HepG2 (cell line): ENCODE measurements at regions of chr9 and their contacts with region 1.

Region 1: DNA sequence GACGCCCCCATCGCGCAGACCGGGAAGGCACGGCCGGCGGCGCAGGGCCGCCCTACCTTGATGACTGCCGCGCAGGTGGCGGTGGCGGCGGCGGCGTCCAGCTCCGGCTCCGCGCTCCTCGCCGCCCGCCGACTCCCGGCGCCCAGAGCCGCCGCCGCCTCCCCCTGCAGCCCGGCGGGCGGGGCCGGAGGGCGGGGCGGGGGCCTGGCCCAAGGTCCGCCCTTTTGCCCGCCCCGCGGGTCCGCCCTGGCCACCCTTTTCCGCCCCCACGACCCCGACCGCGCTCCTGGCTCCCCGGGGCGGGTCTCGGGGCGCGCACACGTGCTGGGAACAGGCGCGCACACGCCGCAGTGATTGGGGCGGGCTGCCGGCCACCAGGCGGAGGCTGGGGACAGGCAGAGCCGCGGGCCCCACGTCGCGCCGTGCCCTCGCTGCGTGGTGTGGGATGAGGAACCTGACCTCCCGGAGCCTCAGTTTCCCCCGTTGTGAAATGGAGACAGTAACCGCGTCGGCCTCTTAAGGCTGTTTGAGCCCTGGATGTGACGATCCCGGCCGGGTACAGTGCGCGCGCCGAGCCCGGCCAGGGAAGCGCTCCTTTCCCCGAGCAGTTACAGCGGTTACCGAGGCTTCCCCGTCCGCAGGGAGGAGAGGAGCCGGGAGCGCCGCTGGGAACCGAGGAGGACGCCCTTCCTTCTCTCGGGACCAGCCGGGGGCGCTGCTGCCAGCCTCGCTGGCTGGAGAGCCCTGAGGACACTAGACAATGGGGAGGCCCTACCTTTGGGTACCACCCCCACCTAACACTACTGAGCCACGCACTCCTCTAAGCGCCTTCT is at the start of gene CORO2A:
- DNase-seq: peak; percentile 67
- ATAC-seq: peak; percentile 81
- H3K4me3 ChIP-seq: peak within 1 kb of the TSS; percentile 81 to 98 (median 84)
- H3K27ac ChIP-seq: peak within 1 kb of the TSS; percentile 82
- H3K4me1 ChIP-seq: peaks cover 44% of the 10 kb centered on the region
- H3K27me3 ChIP-seq: no peaks in the 10 kb centered on the region
- CTCF ChIP-seq: peak; percentile 88
- EP300 ChIP-seq: 0 out of 4 replicates have a peak, but pooled peaks of 1 of the 2 experiments have one; percentile 24
- POLR2A ChIP-seq: peak; percentile 45 to 80; a peak in 3 of 4 replicates
- RAD21 ChIP-seq: peak; percentile 56
- total RNA-seq, gene CORO2A: 14.4 and 19.8 TPM in 2 replicates

Region 2: GRCh38 chr9:98074115-98074990 is 118.4 kb before region 1 on chr9:
- CTCF ChIA-PET with region 1: no interaction called
- POLR2A ChIA-PET with region 1: no interaction called
- in situ Hi-C with region 1: no loop called
- intact Hi-C with region 1: loop called (anchors 5 kb)
- DNase-seq: peak; percentile 36
- ATAC-seq: peak; percentile 73
- H3K4me3 ChIP-seq: no peak overlapping the region
- H3K27ac ChIP-seq: peak overlapping the region; percentile 29
- H3K4me1 ChIP-seq: peaks cover 42% of the 10 kb centered on the region
- H3K27me3 ChIP-seq: no peaks in the 10 kb centered on the region
- CTCF ChIP-seq: peak; percentile 87
- EP300 ChIP-seq: no peak
- POLR2A ChIP-seq: no peak
- RAD21 ChIP-seq: peak; percentile 74

Region 3: GRCh38 chr9:98118640-98119601 is 73.8 kb before region 1 on chr9 and contains the start of gene TRIM14:
- CTCF ChIA-PET with region 1: interaction called, 3 read pairs
- POLR2A ChIA-PET with region 1: interaction called, 24 read pairs
- in situ Hi-C with region 1: loop called (anchors 5 kb)
- intact Hi-C with region 1: loop called (anchors 1 kb)
- DNase-seq: peak; percentile 69
- ATAC-seq: peak; percentile 88
- H3K4me3 ChIP-seq: peak within 1 kb of the TSS; percentile 57 to 87 (median 81)
- H3K27ac ChIP-seq: peak within 1 kb of the TSS; percentile 81
- H3K4me1 ChIP-seq: peaks cover 19% of the 10 kb centered on the region
- H3K27me3 ChIP-seq: no peaks in the 10 kb centered on the region
- CTCF ChIP-seq: peak; percentile 86
- EP300 ChIP-seq: no peak
- POLR2A ChIP-seq: peak; percentile 41 to 46; a peak in 3 of 4 replicates
- RAD21 ChIP-seq: peak; percentile 76
- total RNA-seq, gene TRIM14: 13.0 and 13.8 TPM in 2 replicates

Region 4: GRCh38 chr9:98146101-98146991 is 46.4 kb before region 1 on chr9:
- CTCF ChIA-PET with region 1: no interaction called
- POLR2A ChIA-PET with region 1: interaction called, 5 read pairs
- in situ Hi-C with region 1: no loop called
- intact Hi-C with region 1: loop called (anchors 2 kb)
- DNase-seq: peak; percentile 94
- ATAC-seq: peak; percentile 96
- H3K4me3 ChIP-seq: peak overlapping the region in 1 of 3 experiments; percentile 37; a peak in 2 of 6 replicates
- H3K27ac ChIP-seq: peak overlapping the region; percentile 85
- H3K4me1 ChIP-seq: peaks cover 63% of the 10 kb centered on the region
- H3K27me3 ChIP-seq: no peaks in the 10 kb centered on the region
- CTCF ChIP-seq: peak; percentile 45
- EP300 ChIP-seq: peak; percentile 59 to 78; a peak in 2 of 4 replicates
- POLR2A ChIP-seq: peak in 1 of 2 experiments; percentile 59; a peak in 2 of 4 replicates
- RAD21 ChIP-seq: no peak; the same call in 1 of the 2 replicates

Region 5: GRCh38 chr9:98176391-98177259 is 16.1 kb before region 1 on chr9:
- CTCF ChIA-PET with region 1: no interaction called
- POLR2A ChIA-PET with region 1: no interaction called
- in situ Hi-C with region 1: no loop called
- intact Hi-C with region 1: loop called (anchors 2 kb)
- DNase-seq: peak; percentile 53
- ATAC-seq: peak; percentile 42
- H3K4me3 ChIP-seq: peak overlapping the region in 1 of 3 experiments; percentile 17; a peak in 2 of 6 replicates
- H3K27ac ChIP-seq: peak overlapping the region; percentile 58
- H3K4me1 ChIP-seq: peaks cover 84% of the 10 kb centered on the region
- H3K27me3 ChIP-seq: no peaks in the 10 kb centered on the region
- CTCF ChIP-seq: no peak
- EP300 ChIP-seq: peak in 1 of 2 experiments; percentile 72; a peak in 1 of 4 replicates
- POLR2A ChIP-seq: no peak
- RAD21 ChIP-seq: no peak

Region 6: DNA sequence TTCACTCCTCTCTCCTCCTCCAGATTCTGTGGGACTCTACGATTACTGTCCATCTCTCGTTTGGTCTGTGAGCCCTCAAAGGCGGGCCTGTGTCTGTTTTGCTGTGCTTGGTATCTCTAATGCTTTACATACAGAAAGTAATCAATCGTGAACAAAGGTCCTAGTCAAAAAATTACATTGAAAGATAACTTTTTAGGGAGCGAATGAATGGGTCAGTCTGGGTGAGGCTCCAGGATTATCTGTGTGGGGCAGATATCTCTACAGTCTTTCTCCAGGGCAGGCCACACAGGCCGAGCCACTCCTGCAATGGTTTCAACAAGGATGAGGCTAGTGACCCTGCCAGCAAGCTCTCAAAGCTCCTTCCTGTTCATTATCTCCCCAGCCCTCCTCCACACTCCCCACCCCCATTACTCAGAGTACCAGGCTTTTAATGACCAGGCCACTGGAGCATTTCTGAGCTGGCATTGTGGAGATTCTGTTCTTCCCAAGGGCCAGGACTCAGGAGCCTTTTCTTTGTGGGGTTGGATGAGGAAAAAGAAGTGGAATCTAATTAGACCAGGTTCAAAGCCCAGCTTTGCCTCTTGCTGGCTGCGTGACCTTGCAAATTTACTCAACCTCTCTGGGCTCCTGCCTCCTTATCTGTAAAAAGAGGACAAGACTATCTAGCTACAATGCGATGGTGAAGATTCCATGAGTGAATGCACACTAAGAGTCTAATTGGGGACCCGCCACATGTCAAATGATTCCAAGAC is 10.5 kb before region 1 on chr9:
- CTCF ChIA-PET with region 1: no interaction called
- POLR2A ChIA-PET with region 1: interaction called, 15 read pairs
- in situ Hi-C with region 1: no loop called
- intact Hi-C with region 1: loop called (anchors 2 kb)
- DNase-seq: no peak
- ATAC-seq: peak; percentile 75
- H3K4me3 ChIP-seq: peak overlapping the region in 1 of 3 experiments; percentile 48; a peak in 1 of 6 replicates
- H3K27ac ChIP-seq: peak overlapping the region; percentile 89
- H3K4me1 ChIP-seq: peaks cover 65% of the 10 kb centered on the region
- H3K27me3 ChIP-seq: no peaks in the 10 kb centered on the region
- CTCF ChIP-seq: no peak
- EP300 ChIP-seq: no peak
- POLR2A ChIP-seq: no peak
- RAD21 ChIP-seq: no peak

Region 7: DNA sequence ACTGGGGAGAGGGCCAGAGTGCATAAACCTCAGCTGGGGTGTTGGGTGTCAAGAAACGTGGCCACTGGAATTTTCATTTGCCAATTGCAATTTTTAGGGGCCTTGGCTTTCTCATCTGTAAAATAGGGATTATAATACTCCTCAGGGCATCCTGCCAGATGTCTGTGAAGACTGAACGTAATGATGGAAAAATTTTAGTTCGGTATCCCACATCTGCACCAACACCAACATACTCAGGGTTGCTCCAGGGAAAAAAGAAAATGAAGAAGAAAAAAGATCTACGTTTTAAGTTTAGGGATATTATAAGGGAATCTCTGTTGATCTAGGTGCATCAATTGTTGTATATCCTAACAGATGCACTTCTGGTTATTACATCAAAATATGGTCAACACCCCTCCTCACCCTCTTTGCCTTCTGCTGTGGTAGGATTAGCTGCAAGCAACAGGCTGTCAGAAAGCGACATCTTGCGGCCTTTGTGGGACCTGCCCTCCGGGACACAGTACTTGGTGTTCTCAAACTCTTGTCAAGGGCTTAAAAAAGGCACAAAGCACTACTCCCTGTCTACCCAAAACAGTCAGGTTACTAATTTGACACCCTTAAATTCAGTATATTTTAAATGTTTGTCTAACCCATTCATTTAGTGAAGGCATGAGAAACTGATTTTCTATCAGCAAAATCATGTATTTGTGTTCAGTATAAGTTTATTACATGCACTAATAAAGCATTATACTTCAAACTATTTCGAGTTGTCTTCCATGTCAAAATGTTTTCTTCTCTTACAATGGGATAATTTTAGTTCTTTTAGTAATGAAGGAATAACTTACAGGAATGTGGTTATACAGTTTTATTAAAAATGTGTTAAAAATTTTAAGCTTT is 71.0 kb after region 1 on chr9:
- CTCF ChIA-PET with region 1: interaction called, 8 read pairs
- POLR2A ChIA-PET with region 1: no interaction called
- in situ Hi-C with region 1: no loop called
- intact Hi-C with region 1: loop called (anchors 5 kb)
- DNase-seq: peak; percentile 61
- ATAC-seq: peak; percentile 100
- H3K4me3 ChIP-seq: no peak overlapping the region
- H3K27ac ChIP-seq: no peak overlapping the region
- H3K4me1 ChIP-seq: peaks cover 18% of the 10 kb centered on the region
- H3K27me3 ChIP-seq: peaks cover 0 to under 1% of the 10 kb centered on the region in 2 experiments; a peak in 1 of 5 replicates
- CTCF ChIP-seq: peak; percentile 95
- EP300 ChIP-seq: no peak
- POLR2A ChIP-seq: no peak
- RAD21 ChIP-seq: peak; percentile 88

Region 8: GRCh38 chr9:98287383-98287782 is 94.7 kb after region 1 on chr9:
- CTCF ChIA-PET with region 1: no interaction called
- POLR2A ChIA-PET with region 1: no interaction called
- in situ Hi-C with region 1: no loop called
- intact Hi-C with region 1: no loop called
- DNase-seq: no peak
- ATAC-seq: no peak
- H3K4me3 ChIP-seq: no peak overlapping the region
- H3K27ac ChIP-seq: no peak overlapping the region
- H3K4me1 ChIP-seq: peaks cover 15% of the 10 kb centered on the region
- H3K27me3 ChIP-seq: peaks cover 3 to 27% of the 10 kb centered on the region in 2 experiments; a peak in 3 of 5 replicates
- CTCF ChIP-seq: no peak
- EP300 ChIP-seq: no peak
- POLR2A ChIP-seq: no peak
- RAD21 ChIP-seq: no peak